Activated CD4-positive, alpha-beta memory T cell treated with anti-CD3 and anti-CD28 coated beads, Interleukin-2, amount 10 ng/mL, durations not matched to agents 7 days and 5 days (primary cell): ENCODE measurements at regions of chr19 and their contacts with region 1.

Region 1: DNA sequence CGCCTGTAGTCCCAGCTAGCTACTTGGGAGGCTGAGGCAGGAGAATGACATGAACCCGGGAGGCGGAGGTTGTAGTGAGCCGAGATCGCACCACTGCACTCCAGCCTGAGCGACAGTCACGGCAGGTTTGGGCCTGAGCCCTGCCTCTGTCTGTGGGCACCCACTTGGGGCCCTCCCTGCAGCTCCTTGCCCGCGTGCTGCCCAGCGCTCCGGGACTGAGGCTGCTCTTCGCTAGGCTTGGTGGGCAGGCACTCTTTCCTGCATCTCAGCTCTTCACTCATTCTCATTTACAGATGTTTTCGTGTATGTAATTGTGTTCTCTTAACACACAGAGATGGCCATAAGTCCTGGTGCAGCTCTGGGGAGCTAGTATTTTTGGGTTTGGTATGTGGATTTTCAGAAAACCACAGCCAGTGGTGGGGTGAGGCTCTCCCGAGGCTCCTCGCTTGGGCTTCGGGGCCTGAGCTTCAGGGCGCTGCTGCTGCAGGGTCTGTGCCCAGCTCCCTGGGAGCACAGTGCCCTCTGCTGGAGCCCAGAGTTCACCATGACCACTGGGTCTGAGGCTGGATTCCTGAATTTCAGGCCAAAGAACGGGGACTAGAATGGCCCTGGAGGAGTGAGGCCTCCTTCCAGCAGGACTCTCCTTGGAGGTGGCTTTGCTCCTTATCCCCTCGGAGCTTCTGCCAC is 15.2 kb downstream of the UPF1 start:
- DNase-seq: peak; percentile 72
- H3K4me3 Mint-ChIP-seq: no peak overlapping the region
- H3K27ac Mint-ChIP-seq: no peak overlapping the region
- H3K4me1 Mint-ChIP-seq: peaks cover 79% of the 10 kb centered on the region
- H3K27me3 Mint-ChIP-seq: no peaks in the 10 kb centered on the region

Region 2: DNA sequence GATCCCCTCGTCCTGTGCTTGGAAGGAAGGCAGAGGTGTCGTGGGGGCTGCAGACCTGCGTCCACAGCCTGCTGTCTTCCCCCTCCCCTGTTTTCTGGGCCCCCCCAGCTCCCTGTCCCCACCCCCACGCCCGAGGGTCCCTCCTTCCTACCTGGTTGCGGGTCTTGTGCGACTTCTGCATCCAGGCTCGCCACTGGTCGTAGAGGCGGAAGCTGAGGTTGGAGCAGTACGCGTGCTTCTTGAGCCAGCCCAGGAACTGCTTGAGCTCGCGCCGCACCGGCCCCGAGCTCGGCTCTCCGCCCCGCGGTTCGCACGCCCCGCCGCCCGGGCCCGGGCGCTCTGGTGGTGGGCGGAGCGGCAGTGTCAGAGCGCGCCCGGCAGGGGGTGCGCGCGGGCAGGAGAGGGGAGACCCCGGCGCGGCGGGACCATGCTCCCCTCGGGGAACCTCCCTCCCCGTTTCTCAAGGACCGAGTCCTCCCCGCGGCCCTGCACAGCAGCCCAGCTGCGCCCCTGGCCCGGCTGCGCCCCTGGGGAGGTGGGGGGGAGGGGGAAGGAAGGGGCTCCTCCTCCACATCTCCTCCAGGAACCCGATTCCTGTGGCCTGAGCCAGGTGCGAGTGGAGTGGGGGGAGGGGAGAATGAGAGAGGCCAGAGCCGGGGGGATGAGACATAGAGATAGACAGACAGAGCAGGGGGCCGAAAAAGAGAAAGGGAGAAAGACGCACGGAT is 252.7 kb before region 1 on chr19:
- CTCF ChIA-PET with region 1: interaction called, 14 read pairs
- POLR2A ChIA-PET with region 1: no interaction called
- DNase-seq: peak; percentile 69
- H3K4me3 Mint-ChIP-seq: no peak overlapping the region
- H3K27ac Mint-ChIP-seq: no peak overlapping the region
- H3K4me1 Mint-ChIP-seq: peaks cover 25% of the 10 kb centered on the region
- H3K27me3 Mint-ChIP-seq: peaks cover 7% of the 10 kb centered on the region

Region 3: DNA sequence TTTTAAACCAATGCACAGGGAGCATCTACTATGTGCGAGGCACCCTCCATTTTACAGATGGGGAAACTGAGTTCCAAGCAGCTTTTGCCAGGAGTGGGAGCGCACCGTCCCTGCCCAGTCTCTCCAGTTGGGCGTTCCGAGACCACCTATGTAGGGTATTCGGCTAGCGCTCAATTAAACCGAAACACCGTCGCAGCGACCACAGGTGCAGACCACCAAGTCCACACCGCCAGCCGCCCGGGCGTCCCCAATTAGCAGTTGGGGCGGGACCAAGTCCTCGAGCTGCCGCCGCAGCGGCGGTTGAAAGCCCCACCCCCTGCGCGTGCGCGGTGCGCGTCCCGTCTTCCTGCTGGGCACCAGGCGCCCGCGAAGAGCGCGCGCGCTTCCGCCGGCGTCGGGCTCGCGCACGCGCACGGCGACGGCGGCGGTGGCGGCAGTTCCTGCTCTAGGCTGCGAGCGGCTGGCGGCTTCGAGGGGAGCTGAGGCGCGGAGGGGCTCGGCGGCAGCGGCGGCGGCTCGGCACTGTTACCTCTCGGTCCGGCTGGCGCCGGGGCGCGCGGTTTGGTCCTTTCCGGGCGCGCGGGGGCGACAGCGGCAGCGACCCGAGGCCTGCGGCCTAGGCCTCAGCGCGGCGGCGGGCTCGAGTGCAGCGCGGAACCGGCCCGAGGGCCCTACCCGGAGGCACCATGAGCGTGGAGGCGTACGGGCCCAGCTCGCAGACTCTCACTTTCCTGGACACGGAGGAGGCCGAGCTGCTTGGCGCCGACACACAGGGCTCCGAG is 15.3 kb before region 1 on chr19 and contains the start of gene UPF1:
- CTCF ChIA-PET with region 1: interaction called, 12 read pairs
- POLR2A ChIA-PET with region 1: interaction called, 44 read pairs
- DNase-seq: peak; percentile 95
- H3K4me3 Mint-ChIP-seq: peak within 1 kb of the TSS; percentile 97
- H3K27ac Mint-ChIP-seq: peak within 1 kb of the TSS; percentile 83
- H3K4me1 Mint-ChIP-seq: peaks cover 40% of the 10 kb centered on the region
- H3K27me3 Mint-ChIP-seq: peaks cover 4% of the 10 kb centered on the region
- total RNA-seq, gene UPF1: 74.4 to 74.6 TPM

Region 4: DNA sequence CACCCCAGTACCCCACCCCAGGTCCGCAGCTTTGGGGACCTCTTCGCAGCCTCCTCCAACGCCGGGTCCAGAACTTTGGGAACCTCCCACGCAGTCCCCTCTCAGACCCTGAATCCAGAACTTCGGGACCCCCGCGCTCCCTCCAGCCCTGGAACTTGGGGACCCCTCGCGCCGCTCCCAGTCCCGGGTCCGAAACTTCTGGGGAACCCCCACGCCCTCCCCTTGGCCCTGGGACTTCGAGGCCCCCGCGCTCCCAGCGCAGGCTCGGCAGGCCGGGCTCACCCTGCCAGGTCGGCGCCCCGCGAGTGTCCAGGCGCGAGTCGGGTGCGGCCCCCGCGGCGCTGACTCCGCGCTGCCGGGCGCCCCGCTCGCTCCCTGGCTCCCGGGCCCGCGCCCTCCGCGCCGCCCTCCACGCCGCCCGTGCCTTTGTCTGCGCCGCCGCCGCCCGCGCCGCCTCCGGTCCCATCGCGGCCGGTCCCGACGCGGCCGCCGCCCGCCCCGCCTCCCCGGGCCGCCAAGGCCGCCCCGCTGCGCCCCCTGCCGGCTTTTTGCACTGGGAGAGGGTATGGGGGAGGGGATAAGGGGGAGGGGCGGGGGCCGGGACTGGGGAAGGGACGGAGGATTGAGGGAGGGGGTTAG is 93.9 kb after region 1 on chr19 and contains the start of gene HOMER3:
- CTCF ChIA-PET with region 1: no interaction called
- POLR2A ChIA-PET with region 1: no interaction called
- DNase-seq: peak; percentile 75
- H3K4me3 Mint-ChIP-seq: no peak within 1 kb of the TSS
- H3K27ac Mint-ChIP-seq: no peak within 1 kb of the TSS
- H3K4me1 Mint-ChIP-seq: peaks cover 7% of the 10 kb centered on the region
- H3K27me3 Mint-ChIP-seq: peaks cover 37% of the 10 kb centered on the region
- total RNA-seq, gene HOMER3: not detected